Activated T-helper 1 cell treated with anti-CD3 and anti-CD28 coated beads, Interleukin-12 subunit alpha, Interleukin-12 subunit beta, Interleukin-2, Interleukin-4 antibody, amounts not matched to agents 30 ng/mL and 10 ng/mL and 1 ng/mL, durations not matched to agents 14 hours and 24 hours and 36 hours (primary cell): ENCODE measurements at regions of chr6 and their contacts with region 1.

Region 1: DNA sequence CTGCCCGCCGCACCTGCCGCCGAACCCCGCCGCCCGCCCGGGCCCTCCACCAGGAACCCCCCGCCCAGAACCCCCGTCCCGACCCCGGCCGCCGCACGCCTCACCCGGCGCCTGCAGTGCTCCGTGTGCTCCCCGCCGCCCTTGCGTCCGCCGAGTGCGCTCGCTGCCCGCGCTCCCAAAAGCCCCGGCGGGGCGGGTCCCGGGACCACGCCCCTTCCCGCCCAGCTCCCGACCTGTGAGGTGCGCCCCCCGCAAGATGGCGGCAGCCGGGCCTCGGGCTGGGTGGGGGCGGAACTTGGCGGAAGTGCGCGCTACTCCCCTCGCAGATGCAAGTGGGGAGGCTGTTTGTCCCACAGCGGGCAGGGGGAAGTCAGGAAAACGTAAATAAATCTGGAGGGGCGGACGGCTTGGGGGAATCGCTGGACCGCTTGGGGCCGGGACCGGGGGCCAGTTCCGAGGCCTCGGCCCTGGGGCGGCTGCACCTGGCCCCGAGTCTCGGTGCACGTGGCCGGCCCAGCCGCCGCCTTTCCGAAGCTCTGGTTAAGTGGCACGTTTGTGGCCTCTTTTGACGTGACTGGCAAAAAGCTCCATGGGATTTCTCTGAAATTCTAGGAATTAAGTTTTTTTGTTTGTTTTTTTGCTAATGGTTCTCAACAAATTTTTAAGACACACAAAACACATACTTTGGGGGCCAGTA is at the start of gene EZR:
- DNase-seq: peak; percentile 71
- H3K4me3 Mint-ChIP-seq: peak within 1 kb of the TSS; percentile 79
- H3K27ac Mint-ChIP-seq: peak within 1 kb of the TSS; percentile 86
- H3K4me1 Mint-ChIP-seq: peaks cover 55% of the 10 kb centered on the region
- H3K27me3 Mint-ChIP-seq: no peaks in the 10 kb centered on the region
- total RNA-seq, gene EZR: 205 and 206 TPM in 2 replicates

Region 2: GRCh38 chr6:158559895-158560835 is 259.2 kb before region 1 on chr6 and contains the start of gene TMEM181:
- intact Hi-C with region 1: loop called (anchors 5 kb)
- DNase-seq: peak; percentile 84
- H3K4me3 Mint-ChIP-seq: peak within 1 kb of the TSS; percentile 97
- H3K27ac Mint-ChIP-seq: peak within 1 kb of the TSS; percentile 95
- H3K4me1 Mint-ChIP-seq: peaks cover 32% of the 10 kb centered on the region
- H3K27me3 Mint-ChIP-seq: peaks cover 3% of the 10 kb centered on the region
- total RNA-seq, gene TMEM181: 17.0 and 17.7 TPM in 2 replicates

Region 3: DNA sequence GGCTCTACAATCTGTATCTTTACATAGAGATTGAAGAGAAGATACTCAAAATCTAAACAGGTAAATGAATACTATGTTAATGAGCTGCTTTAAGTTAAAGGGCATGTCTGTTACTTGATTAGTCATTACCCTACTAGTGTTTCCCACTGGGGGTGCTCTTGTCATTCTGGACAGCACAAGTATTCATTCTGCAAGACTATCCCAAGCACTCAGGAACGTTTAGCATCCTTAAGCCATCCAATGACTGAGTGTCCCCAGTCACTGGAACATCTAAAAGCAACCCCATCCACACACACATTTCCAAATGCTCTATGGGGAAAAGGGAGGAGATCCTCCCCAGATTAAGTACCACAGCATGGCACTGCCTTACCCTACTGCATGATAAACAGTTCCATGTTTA is 25.9 kb before region 1 on chr6:
- intact Hi-C with region 1: loop called (anchors 1 kb)
- DNase-seq: no peak
- H3K4me3 Mint-ChIP-seq: no peak overlapping the region
- H3K27ac Mint-ChIP-seq: peak overlapping the region; percentile 4
- H3K4me1 Mint-ChIP-seq: peaks cover 73% of the 10 kb centered on the region
- H3K27me3 Mint-ChIP-seq: no peaks in the 10 kb centered on the region

Region 4: DNA sequence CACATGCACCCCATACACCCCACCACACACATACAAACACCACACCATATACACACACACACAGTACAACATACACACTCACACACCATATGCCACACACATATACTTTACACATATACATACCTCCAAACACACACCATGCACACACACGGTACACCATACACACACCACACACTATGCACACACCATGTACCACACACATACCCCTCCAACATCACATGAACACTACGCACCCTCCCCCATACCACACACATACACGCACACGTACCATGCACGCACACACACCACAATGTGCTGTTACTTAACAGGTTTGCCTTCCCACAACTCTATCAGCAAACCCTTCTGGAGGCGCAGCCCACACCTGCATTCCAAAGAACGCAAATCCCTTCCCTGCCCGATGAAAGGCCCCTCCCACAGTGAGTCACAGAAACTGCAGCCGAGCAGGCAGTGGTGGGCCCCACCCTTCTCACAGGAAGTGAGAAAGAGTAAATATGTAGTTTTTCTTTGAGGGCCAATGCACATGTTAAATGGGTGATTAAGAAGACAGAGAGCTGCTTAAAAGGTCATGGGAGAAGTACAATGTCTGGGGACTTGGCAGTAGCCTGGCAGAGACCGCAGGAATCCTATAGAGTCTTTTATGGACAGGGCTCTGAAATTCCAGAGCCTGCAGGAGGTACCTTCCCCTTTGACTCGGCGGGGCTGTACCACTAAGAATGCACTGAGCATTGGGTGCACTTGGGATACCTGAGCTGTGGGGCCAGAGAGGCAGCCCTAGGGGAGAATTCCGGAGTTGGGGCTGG is 33.9 kb after region 1 on chr6:
- intact Hi-C with region 1: loop called (anchors 1 kb)
- DNase-seq: peak; percentile 85
- H3K4me3 Mint-ChIP-seq: no peak overlapping the region
- H3K27ac Mint-ChIP-seq: no peak overlapping the region
- H3K4me1 Mint-ChIP-seq: peaks cover 20% of the 10 kb centered on the region
- H3K27me3 Mint-ChIP-seq: no peaks in the 10 kb centered on the region

Region 5: GRCh38 chr6:158863646-158864045 is 44.3 kb after region 1 on chr6:
- intact Hi-C with region 1: no loop called
- DNase-seq: no peak
- H3K4me3 Mint-ChIP-seq: no peak overlapping the region
- H3K27ac Mint-ChIP-seq: no peak overlapping the region
- H3K4me1 Mint-ChIP-seq: peaks cover 16% of the 10 kb centered on the region
- H3K27me3 Mint-ChIP-seq: peaks cover 2% of the 10 kb centered on the region

Region 6: GRCh38 chr6:158972241-158973233 is 153.2 kb after region 1 on chr6:
- intact Hi-C with region 1: loop called (anchors 1 kb)
- DNase-seq: no peak
- H3K4me3 Mint-ChIP-seq: no peak overlapping the region
- H3K27ac Mint-ChIP-seq: no peak overlapping the region
- H3K4me1 Mint-ChIP-seq: no peaks in the 10 kb centered on the region
- H3K27me3 Mint-ChIP-seq: peaks cover 3% of the 10 kb centered on the region

Region 7: GRCh38 chr6:159203304-159204005 is 384.1 kb after region 1 on chr6:
- intact Hi-C with region 1: no loop called
- DNase-seq: no peak
- H3K4me3 Mint-ChIP-seq: no peak overlapping the region
- H3K27ac Mint-ChIP-seq: no peak overlapping the region
- H3K4me1 Mint-ChIP-seq: peaks cover 8% of the 10 kb centered on the region
- H3K27me3 Mint-ChIP-seq: peaks cover 6% of the 10 kb centered on the region

Region 8: GRCh38 chr6:159238920-159239558 is 419.7 kb after region 1 on chr6:
- intact Hi-C with region 1: no loop called
- DNase-seq: no peak
- H3K4me3 Mint-ChIP-seq: no peak overlapping the region
- H3K27ac Mint-ChIP-seq: no peak overlapping the region
- H3K4me1 Mint-ChIP-seq: no peaks in the 10 kb centered on the region
- H3K27me3 Mint-ChIP-seq: peaks cover 35% of the 10 kb centered on the region

Region 9: GRCh38 chr6:159329081-159329480 is 509.7 kb after region 1 on chr6:
- intact Hi-C with region 1: no loop called
- DNase-seq: no peak
- H3K4me3 Mint-ChIP-seq: no peak overlapping the region
- H3K27ac Mint-ChIP-seq: no peak overlapping the region
- H3K4me1 Mint-ChIP-seq: no peaks in the 10 kb centered on the region
- H3K27me3 Mint-ChIP-seq: peaks cover 4% of the 10 kb centered on the region

Region 10: DNA sequence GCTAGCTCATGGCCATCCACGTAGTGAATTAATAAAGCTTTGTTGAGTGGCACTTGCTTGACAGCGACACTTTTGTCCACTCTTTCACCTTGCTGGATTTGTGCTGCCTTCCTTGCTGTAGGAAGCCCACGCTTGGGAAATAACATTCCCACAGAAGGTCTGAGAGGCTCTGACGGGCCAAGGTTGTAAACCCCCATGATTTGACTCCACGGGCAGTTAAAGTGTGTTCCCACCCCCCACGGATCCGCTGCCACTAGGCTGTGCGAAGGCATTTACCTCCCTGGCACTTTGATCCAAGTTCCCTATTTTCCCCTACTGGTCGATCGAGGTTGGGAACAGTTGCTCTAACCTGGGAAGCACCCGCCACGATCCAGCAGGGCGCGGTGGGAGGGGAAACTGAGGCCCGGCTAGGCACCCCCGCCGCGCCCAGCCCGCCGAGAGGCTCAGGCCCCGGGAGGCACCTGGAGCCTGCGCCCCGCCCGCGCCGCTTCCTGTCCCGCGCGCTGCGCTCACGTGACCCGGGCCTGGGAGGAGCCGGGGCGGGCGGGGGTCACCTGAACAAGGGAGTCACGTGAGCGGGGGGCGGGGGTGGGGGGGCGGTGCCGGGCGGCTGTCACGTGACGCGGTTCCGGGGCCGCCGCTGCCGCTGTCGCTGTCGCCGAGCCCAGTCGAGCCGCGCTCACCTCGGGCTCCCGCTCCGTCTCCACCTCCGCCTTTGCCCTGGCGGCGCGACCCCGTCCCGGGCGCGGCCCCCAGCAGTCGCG is 1149.3 kb after region 1 on chr6 and contains the start of gene IGF2R:
- intact Hi-C with region 1: loop called (anchors 5 kb)
- DNase-seq: peak; percentile 90
- H3K4me3 Mint-ChIP-seq: peak within 1 kb of the TSS; percentile 96
- H3K27ac Mint-ChIP-seq: peak within 1 kb of the TSS; percentile 93
- H3K4me1 Mint-ChIP-seq: peaks cover 34% of the 10 kb centered on the region
- H3K27me3 Mint-ChIP-seq: peaks cover 17% of the 10 kb centered on the region
- total RNA-seq, gene IGF2R: 118 and 126 TPM in 2 replicates